ENCODE measurements at regions of chr12 and their contacts with region 1.

Region 1: DNA sequence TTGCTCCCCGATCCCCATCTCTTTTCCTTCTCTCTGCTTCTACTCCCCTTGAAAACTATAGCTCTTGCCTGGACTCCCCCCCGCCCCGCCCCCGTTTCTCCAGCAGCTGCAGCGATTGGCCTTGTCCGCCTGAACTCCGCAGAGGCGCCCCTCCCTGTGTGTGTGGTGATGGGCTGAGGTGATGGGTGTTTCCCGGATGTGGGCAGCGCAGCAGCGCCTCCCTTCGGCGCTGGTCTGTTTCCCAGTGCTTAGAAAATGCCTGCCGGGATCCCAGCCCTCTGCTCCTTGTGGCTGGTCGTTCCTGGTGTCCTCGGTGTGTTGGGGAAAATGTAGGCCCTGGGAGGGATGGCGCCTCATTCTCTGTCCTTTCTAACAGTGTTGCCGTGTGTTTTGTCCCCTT is 43.3 kb downstream of the GALNT8 start:
- DNase-seq: peak; percentile 37
- H3K4me3 ChIP-seq: no peak overlapping the region
- H3K27ac ChIP-seq: no peak overlapping the region
- H3K4me1 ChIP-seq: no peaks in the 10 kb centered on the region
- H3K27me3 ChIP-seq: no peaks in the 10 kb centered on the region
- CTCF ChIP-seq: no peak

Region 2: DNA sequence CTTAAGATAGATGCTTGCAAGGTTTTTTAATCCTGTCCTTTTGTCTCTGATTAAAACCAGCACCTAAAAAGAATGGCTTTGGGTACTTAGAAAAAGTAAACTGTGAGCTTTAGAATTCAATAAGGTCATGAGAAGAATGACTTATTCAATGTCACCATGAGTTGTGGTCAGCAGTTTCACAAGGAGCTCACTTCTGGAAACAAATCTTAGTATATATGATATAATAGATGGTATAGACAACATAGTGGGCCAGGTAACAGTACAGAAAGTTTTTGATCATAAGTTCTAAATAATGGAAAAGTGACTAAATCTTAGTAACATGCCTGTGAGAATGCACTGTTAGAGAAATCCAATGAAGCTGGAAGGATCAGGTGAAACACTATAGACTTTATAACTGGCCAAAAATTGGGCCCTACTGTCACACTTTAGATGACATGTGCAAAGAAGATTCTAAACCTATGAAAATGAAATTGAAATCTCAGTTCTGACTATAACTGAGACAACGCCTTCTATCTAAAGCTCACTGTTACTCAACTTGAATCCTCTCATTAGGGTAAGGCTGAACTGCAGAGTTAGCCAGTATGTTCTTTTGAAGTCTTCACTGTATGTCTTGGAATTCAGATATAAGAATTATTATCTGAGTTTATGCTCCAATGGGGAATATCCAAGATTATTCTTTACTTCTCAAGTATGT is 267.3 kb before region 1 on chr12:
- intact Hi-C with region 1: no loop called
- DNase-seq: no peak
- H3K4me3 ChIP-seq: no peak overlapping the region
- H3K27ac ChIP-seq: no peak overlapping the region
- H3K4me1 ChIP-seq: no peaks in the 10 kb centered on the region
- H3K27me3 ChIP-seq: no peaks in the 10 kb centered on the region
- CTCF ChIP-seq: no peak

Region 3: GRCh38 chr12:4579305-4580102 is 184.0 kb before region 1 on chr12:
- intact Hi-C with region 1: loop called (anchors 5 kb)
- DNase-seq: peak; percentile 33
- H3K4me3 ChIP-seq: no peak overlapping the region
- H3K27ac ChIP-seq: no peak overlapping the region
- H3K4me1 ChIP-seq: peaks cover 2% of the 10 kb centered on the region
- H3K27me3 ChIP-seq: no peaks in the 10 kb centered on the region
- CTCF ChIP-seq: peak; percentile 20

Region 4: DNA sequence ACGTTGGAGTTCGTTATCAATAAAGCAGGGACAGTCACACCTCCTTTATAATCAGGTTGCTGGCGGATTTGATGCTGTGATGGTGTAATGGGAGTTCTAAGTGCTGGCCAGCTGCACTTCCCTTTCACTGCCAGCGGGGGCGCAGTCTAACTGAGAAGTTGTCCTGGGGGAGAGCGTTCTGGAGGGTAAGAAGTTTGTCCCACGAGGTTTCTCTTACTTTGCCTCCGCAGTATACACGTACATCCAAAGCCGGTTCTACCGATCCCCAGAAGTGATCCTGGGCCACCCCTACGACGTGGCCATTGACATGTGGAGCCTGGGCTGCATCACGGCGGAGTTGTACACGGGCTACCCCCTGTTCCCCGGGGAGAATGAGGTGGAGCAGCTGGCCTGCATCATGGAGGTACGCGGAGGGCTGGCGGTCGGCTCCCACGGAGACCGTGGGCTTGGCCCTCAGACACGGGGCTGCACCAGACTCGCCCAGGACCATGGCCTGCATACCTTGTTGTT is 158.8 kb before region 1 on chr12:
- intact Hi-C with region 1: loop called (anchors 2 kb)
- DNase-seq: peak; percentile 85
- H3K4me3 ChIP-seq: peak overlapping the region; percentile 78
- H3K27ac ChIP-seq: no peak overlapping the region
- H3K4me1 ChIP-seq: no peaks in the 10 kb centered on the region
- H3K27me3 ChIP-seq: no peaks in the 10 kb centered on the region
- CTCF ChIP-seq: peak; percentile 99

Measured in colonic mucosa (tissue), 4 donors.